ENCODE measurements at regions of chr14 and their contacts with region 1.

Region 1: GRCh38 chr14:59483900-59484638 is at the starts of genes JKAMP and L3HYPDH:
- DNase-seq: peak; percentile 98
- H3K4me3 Mint-ChIP-seq: peak within 1 kb of the TSS; percentile 92
- H3K27ac Mint-ChIP-seq: peak within 1 kb of the TSS; percentile 86
- H3K4me1 Mint-ChIP-seq: peaks cover 57% of the 10 kb centered on the region
- H3K27me3 Mint-ChIP-seq: no peaks in the 10 kb centered on the region
- total RNA-seq, gene JKAMP: 21.0 to 26.4 TPM
- total RNA-seq, gene L3HYPDH: 7.8 to 7.9 TPM

Region 2: GRCh38 chr14:59189786-59190771 is 294.0 kb before region 1 on chr14:
- CTCF ChIA-PET with region 1: interaction called, 6 read pairs
- POLR2A ChIA-PET with region 1: interaction called, 16 read pairs
- intact Hi-C with region 1: loop called (anchors 1 kb)
- DNase-seq: peak; percentile 86
- H3K4me3 Mint-ChIP-seq: peak overlapping the region; percentile 93
- H3K27ac Mint-ChIP-seq: peak overlapping the region; percentile 49
- H3K4me1 Mint-ChIP-seq: peaks cover 6% of the 10 kb centered on the region
- H3K27me3 Mint-ChIP-seq: peaks cover 3% of the 10 kb centered on the region

Region 3: GRCh38 chr14:59464486-59465315 is 19.4 kb before region 1 on chr14:
- CTCF ChIA-PET with region 1: interaction called, 17 read pairs
- POLR2A ChIA-PET with region 1: interaction called, 23 read pairs
- intact Hi-C with region 1: loop called (anchors 1 kb)
- DNase-seq: peak; percentile 61
- H3K4me3 Mint-ChIP-seq: peak overlapping the region; percentile 81
- H3K27ac Mint-ChIP-seq: no peak overlapping the region
- H3K4me1 Mint-ChIP-seq: peaks cover 3% of the 10 kb centered on the region
- H3K27me3 Mint-ChIP-seq: peaks cover 4% of the 10 kb centered on the region

Region 4: GRCh38 chr14:59576332-59577294 is 92.5 kb after region 1 on chr14 and contains the start of gene CCDC175:
- CTCF ChIA-PET with region 1: interaction called, 17 read pairs
- POLR2A ChIA-PET with region 1: interaction called, 3 read pairs
- intact Hi-C with region 1: no loop called
- DNase-seq: peak; percentile 89
- H3K4me3 Mint-ChIP-seq: peak within 1 kb of the TSS; percentile 74
- H3K27ac Mint-ChIP-seq: no peak within 1 kb of the TSS
- H3K4me1 Mint-ChIP-seq: peaks cover 9% of the 10 kb centered on the region
- H3K27me3 Mint-ChIP-seq: peaks cover 12% of the 10 kb centered on the region
- total RNA-seq, gene CCDC175: not detected

Region 5: GRCh38 chr14:59964251-59965007 is 480.4 kb after region 1 on chr14:
- CTCF ChIA-PET with region 1: no interaction called
- POLR2A ChIA-PET with region 1: no interaction called
- intact Hi-C with region 1: loop called (anchors 10 kb)
- DNase-seq: no peak
- H3K4me3 Mint-ChIP-seq: peak overlapping the region; percentile 74
- H3K27ac Mint-ChIP-seq: peak overlapping the region; percentile 87
- H3K4me1 Mint-ChIP-seq: peaks cover 12% of the 10 kb centered on the region
- H3K27me3 Mint-ChIP-seq: no peaks in the 10 kb centered on the region

Region 6: GRCh38 chr14:60091550-60092530 is 607.8 kb after region 1 on chr14 and contains the start of gene PCNX4:
- CTCF ChIA-PET with region 1: no interaction called
- POLR2A ChIA-PET with region 1: no interaction called
- intact Hi-C with region 1: loop called (anchors 1 kb)
- DNase-seq: peak; percentile 95
- H3K4me3 Mint-ChIP-seq: peak within 1 kb of the TSS; percentile 95
- H3K27ac Mint-ChIP-seq: peak within 1 kb of the TSS; percentile 91
- H3K4me1 Mint-ChIP-seq: peaks cover 30% of the 10 kb centered on the region
- H3K27me3 Mint-ChIP-seq: no peaks in the 10 kb centered on the region
- total RNA-seq, gene PCNX4: 26.3 to 26.9 TPM

Region 7: DNA sequence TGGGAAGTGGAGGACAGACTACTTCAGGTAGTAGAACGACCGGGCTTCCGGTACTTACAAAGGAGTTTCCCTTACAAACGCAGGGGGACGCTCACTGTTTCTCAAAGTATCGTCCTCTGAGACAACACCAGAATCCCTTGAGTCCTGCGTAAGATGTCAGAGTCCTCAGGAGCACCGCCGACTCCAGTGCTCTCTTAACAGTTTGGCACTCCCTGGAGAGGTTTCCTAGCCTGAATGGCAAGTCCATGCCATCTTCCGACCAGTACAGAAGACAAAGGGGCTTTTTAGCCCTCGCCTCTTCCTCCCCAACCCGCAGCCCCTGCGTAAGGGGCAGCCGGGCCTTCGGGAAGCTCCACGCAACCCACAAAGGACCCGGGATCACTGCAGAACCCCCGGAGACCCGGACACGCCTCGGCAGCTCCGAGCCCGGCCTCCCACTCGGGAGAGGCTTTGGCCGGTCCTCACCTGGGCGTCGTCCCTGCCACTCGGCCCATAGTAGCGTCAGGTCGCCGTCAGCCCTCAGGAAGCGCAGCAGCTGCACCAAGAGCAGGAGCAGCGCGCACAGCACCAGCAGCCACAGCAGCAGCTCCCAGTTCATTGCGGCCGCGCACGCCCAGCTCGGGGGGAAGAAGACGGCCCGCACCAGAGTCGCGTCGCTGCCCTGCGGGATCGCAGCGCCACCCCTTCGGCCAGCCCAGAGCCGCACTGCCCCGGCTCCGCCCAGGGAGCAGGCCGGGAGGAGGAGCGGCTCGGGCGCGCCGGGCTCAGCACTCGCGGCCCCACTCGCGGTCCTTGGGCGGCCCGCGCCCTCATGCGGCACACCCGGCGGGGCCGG is 680.9 kb after region 1 on chr14 and contains the start of gene DHRS7:
- CTCF ChIA-PET with region 1: no interaction called
- POLR2A ChIA-PET with region 1: no interaction called
- intact Hi-C with region 1: loop called (anchors 10 kb)
- DNase-seq: peak; percentile 79
- H3K4me3 Mint-ChIP-seq: peak within 1 kb of the TSS; percentile 94
- H3K27ac Mint-ChIP-seq: peak within 1 kb of the TSS; percentile 97
- H3K4me1 Mint-ChIP-seq: peaks cover 37% of the 10 kb centered on the region
- H3K27me3 Mint-ChIP-seq: no peaks in the 10 kb centered on the region
- total RNA-seq, gene DHRS7: 70.3 to 74.7 TPM